Esophagus squamous epithelium (tissue), 5 donors: ENCODE measurements at regions of chrX and their contacts with region 1.

Region 1: GRCh38 chrX:73855546-73855945 is 292.5 kb downstream of the CHIC1 start:
- DNase-seq: no peak
- H3K4me3 ChIP-seq: no peak overlapping the region
- H3K27ac ChIP-seq: no peak overlapping the region
- H3K4me1 ChIP-seq: no peaks in the 10 kb centered on the region
- H3K27me3 ChIP-seq: no peaks in the 10 kb centered on the region
- CTCF ChIP-seq: peak; percentile 59 to 78 (median 75)
- POLR2A ChIP-seq: no peak

Region 2: DNA sequence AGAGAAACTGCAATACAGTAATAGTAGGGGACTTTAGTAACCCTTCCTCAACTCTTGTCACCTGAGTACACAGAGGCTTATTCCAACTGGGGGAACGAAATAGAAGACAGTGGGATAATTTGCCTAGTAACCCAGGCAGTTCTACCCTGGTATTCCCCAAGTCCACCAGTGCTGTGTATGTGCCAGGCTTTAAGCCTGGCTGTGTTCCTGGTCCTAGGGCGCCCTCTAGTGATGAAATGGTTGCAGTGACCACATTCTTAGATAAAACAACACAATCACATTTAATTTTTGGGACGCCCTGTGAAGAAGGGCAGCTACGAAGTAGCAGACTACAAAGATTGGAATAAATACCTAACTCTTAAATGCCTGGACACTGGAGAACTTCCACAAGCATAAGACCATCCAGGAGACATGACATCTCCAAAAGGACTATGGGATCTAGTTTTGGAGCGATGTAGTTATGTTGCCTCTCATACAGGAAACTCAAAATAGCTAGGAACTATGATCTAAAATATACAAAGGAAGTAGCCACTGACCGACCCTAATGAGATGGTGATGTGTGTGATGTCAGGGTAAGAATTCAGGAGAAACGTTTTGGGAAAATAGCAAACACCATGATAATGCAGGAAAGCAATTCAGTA is 160.0 kb after region 1 on chrX:
- intact Hi-C with region 1: loop called (anchors 5 kb)
- DNase-seq: peak; percentile 0
- H3K4me3 ChIP-seq: no peak overlapping the region
- H3K27ac ChIP-seq: no peak overlapping the region
- H3K4me1 ChIP-seq: no peaks in the 10 kb centered on the region
- H3K27me3 ChIP-seq: no peaks in the 10 kb centered on the region
- CTCF ChIP-seq: peak; percentile 61 to 89 (median 72)
- POLR2A ChIP-seq: no peak

Region 3: DNA sequence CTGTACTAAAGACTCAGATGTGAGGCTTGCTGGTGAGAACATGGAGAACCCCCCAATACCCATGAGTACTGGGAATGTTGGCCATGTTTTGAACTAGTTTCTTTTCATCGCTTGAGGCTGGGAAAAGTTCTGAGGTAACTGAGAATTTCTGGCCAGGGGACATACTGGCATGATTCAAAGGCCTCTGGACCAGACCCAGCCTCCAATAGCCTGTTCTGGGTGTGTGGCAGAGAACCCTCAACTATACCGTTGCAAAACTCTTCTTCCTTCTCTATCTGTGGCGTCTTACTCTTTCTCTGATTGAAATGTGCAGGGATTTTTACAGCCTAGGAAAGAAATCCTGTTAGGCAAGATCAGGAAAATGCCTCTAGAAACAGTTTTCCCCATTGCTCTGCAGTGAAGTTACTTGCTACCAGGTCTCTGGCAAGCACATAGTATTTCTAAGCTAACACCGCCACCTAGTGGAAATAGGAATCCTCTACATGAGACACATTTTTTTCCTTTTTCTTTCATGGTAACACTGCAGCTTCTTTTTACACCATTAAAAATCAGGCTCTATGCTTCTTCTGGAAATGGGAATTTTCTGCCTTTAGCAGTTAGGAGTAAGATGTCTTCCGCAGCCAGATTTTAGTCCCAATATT is 277.7 kb after region 1 on chrX:
- intact Hi-C with region 1: loop called (anchors 5 kb)
- DNase-seq: no peak
- H3K4me3 ChIP-seq: no peak overlapping the region
- H3K27ac ChIP-seq: no peak overlapping the region
- H3K4me1 ChIP-seq: no peaks in the 10 kb centered on the region
- H3K27me3 ChIP-seq: no peaks in the 10 kb centered on the region
- CTCF ChIP-seq: peak; percentile 56 to 79 (median 66)
- POLR2A ChIP-seq: no peak

Region 4: DNA sequence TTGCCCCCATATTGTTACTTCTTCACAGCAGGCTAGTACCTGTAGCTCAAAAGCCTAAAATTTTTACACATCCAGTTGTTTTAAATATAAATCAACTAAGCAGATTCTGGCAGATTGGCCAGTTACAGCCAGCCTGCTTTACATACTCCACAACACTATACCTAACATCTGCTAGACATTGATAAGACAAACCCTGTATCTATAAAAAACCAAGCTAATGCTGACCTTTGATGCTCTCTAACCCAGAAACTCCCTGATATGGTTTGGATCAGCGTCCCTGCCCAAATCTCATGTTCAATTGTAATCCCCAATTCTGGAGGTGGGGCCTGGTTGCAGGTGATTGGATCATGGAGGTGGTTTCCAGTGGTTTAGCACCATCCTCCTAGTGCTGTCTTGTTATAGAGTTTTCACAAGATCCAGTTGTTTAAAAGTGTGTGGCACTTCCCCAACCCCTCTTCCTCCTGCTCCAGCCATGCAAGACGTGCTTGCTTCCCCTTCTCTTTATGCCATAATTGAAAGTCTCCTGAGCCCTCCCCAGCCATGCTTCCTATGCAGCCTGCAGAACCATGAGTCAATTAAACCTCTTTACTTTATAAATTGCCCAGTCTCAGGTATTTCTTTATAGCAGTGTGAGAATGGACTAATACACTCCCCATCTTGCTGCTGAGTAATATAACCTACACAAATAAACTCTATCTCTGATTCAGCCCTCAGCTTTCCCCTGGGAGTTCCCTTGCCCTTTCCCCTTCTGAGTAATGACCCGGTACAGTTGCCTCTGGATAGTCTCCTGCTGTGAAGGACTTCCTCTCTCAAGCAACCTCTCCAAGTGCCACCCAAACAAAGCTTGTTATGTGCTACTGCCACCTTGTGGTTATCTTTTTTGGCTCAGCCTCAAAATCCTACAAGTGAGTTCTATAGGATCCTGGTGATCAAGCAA is 488.1 kb after region 1 on chrX:
- intact Hi-C with region 1: loop called (anchors 10 kb)
- DNase-seq: no peak
- H3K4me3 ChIP-seq: no peak overlapping the region
- H3K27ac ChIP-seq: no peak overlapping the region
- H3K4me1 ChIP-seq: no peaks in the 10 kb centered on the region
- H3K27me3 ChIP-seq: no peaks in the 10 kb centered on the region
- CTCF ChIP-seq: peak; percentile 22 to 65 (median 56)
- POLR2A ChIP-seq: no peak